Activated B cell treated with CpG ODN at 0.5 μM for 24 hours (primary cell): ENCODE measurements at regions of chr4 and their contacts with region 1.

Region 1: GRCh38 chr4:2934813-2935761 is 28.1 kb downstream of the NOP14 start:
- DNase-seq: peak; percentile 99
- ATAC-seq: peak; percentile 46
- H3K4me3 Mint-ChIP-seq: peak overlapping the region; percentile 83
- H3K27ac Mint-ChIP-seq: peak overlapping the region; percentile 59
- H3K4me1 Mint-ChIP-seq: peaks cover 66% of the 10 kb centered on the region
- H3K27me3 Mint-ChIP-seq: no peaks in the 10 kb centered on the region
- CTCF ChIP-seq: no peak

Region 2: DNA sequence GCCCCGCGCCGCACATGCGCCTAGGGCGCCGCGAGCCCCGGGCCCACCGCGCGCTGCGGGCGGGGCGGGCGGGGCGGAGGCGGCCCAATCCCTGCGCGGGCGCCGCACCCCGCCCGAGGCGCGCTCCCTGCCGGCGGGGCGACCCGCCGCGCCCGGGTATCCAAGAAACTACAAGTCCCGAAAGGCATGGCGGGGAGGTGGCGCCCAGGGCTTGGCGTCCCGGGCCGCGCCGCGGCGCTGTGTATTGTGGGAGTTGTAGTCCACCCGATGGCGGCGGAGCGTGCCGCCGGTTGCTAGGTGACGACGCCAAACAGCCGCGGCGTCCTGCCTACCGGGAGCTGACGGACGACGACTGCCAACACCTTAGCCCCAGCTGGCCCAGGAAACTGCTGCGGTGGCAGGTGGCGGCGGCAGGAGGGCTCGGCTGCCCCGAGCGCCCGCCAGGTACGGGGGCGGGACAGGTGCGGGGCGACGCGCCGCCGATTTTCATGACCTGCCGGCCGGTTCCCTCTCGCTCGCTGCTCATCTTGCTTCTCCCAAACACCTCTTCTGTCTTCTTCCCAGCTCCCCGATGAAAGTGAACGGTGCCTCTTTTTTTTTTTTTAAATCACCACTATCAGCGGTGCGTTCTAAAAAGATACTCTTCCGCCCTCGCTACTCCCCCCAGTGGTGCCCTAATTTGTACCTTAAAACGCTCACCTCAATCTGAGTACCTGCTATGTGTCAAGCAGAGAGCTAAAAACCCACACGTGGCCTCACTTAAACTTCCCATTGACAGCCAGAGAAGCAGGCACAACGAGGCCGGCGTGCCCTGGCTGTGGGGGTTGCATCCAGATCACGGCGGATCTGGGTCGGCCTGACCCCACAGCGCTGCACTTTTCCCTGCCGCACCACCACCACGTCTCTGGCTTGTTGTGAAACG is 516.2 kb before region 1 on chr4 and contains the start of gene CFAP99:
- CTCF ChIA-PET with region 1: no interaction called
- POLR2A ChIA-PET with region 1: no interaction called
- intact Hi-C with region 1: loop called (anchors 10 kb)
- DNase-seq: peak; percentile 93
- ATAC-seq: peak; percentile 91
- H3K4me3 Mint-ChIP-seq: peak within 1 kb of the TSS; percentile 91
- H3K27ac Mint-ChIP-seq: peak within 1 kb of the TSS; percentile 90
- H3K4me1 Mint-ChIP-seq: peaks cover 39% of the 10 kb centered on the region
- H3K27me3 Mint-ChIP-seq: peaks cover 28% of the 10 kb centered on the region
- CTCF ChIP-seq: no peak
- total RNA-seq, gene CFAP99: not detected in 2 replicates

Region 3: GRCh38 chr4:2598511-2599303 is 336.4 kb before region 1 on chr4:
- CTCF ChIA-PET with region 1: no interaction called
- POLR2A ChIA-PET with region 1: no interaction called
- intact Hi-C with region 1: loop called (anchors 2 kb)
- DNase-seq: peak; percentile 41
- ATAC-seq: peak; percentile 98
- H3K4me3 Mint-ChIP-seq: peak overlapping the region; percentile 67
- H3K27ac Mint-ChIP-seq: peak overlapping the region; percentile 85
- H3K4me1 Mint-ChIP-seq: peaks cover 68% of the 10 kb centered on the region
- H3K27me3 Mint-ChIP-seq: no peaks in the 10 kb centered on the region
- CTCF ChIP-seq: no peak

Region 4: GRCh38 chr4:2689825-2690700 is 245.0 kb before region 1 on chr4:
- CTCF ChIA-PET with region 1: no interaction called
- POLR2A ChIA-PET with region 1: interaction called, 4 read pairs
- intact Hi-C with region 1: loop called (anchors 2 kb)
- DNase-seq: peak; percentile 78
- ATAC-seq: peak; percentile 85
- H3K4me3 Mint-ChIP-seq: peak overlapping the region; percentile 75
- H3K27ac Mint-ChIP-seq: peak overlapping the region; percentile 95
- H3K4me1 Mint-ChIP-seq: peaks cover 70% of the 10 kb centered on the region
- H3K27me3 Mint-ChIP-seq: no peaks in the 10 kb centered on the region
- CTCF ChIP-seq: no peak

Region 5: DNA sequence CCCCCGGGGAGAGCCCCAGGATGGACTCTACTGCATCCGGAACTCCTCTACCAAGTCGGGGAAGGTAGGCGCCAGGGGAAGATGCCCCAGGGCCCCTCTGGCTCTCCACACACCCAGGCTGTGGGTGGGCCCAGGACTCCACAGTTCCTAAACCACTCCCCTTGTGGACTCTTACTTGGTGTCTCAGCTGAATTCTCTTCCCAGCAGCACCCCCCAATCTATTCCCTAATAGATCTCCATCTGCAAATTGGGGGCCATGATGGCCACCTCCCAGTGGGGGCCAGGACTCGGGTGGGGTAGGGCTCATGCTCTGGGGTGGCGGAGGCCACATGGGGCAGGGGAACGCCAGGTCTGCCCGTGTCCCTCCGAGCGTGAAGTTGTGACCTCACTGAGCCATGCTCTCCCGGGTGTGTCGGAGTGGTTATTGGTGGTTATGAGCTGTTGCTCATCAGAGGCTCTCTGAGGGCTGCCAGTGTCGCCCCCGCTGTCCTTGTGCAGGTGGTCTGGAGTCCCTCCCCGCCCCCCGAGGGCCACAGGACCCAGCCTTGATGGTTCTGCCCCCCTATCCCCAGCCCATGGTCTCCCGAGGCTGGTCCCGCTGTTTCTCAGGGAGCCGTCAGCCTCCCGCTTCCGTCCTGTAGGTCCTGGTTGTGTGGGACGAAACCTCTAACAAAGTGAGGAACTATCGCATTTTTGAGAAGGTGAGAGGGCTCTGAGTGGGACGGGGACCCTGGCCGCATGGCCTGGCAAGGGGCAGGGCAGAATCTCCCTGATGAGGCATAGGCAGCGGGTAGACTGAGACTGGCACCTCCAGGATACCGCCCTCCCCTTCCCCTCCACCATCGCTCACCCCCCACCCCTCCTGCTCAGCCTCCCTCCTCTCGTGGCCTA is 102.5 kb before region 1 on chr4:
- CTCF ChIA-PET with region 1: no interaction called
- POLR2A ChIA-PET with region 1: no interaction called
- intact Hi-C with region 1: loop called (anchors 5 kb)
- DNase-seq: peak; percentile 65
- ATAC-seq: peak; percentile 85
- H3K4me3 Mint-ChIP-seq: peak overlapping the region; percentile 67
- H3K27ac Mint-ChIP-seq: peak overlapping the region; percentile 83
- H3K4me1 Mint-ChIP-seq: peaks cover 60% of the 10 kb centered on the region
- H3K27me3 Mint-ChIP-seq: no peaks in the 10 kb centered on the region
- CTCF ChIP-seq: no peak

Region 6: DNA sequence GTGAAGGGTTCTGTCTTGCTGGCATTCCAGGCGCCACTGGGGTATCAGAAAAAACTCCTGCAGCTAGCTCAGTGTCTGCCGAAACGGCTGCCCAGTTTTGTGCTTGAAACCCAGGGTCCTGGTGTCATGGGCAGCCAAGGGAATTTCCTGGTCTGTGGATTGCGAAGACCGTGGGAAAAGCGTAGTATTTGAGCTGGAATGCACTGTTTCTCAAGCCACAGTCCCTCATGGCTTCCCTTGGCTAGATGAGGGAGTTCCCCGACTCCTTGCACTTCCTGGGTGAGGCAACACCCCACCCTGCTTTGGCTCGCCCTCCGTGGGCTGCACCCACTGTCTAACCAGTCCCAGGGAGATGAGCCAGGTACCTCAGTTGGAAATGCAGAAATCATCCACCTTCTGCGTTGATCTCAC is 11.9 kb before region 1 on chr4:
- CTCF ChIA-PET with region 1: no interaction called
- POLR2A ChIA-PET with region 1: interaction called, 17 read pairs
- intact Hi-C with region 1: loop called (anchors 1 kb)
- DNase-seq: no peak
- ATAC-seq: no peak
- H3K4me3 Mint-ChIP-seq: no peak overlapping the region
- H3K27ac Mint-ChIP-seq: peak overlapping the region; percentile 79
- H3K4me1 Mint-ChIP-seq: peaks cover 65% of the 10 kb centered on the region
- H3K27me3 Mint-ChIP-seq: no peaks in the 10 kb centered on the region
- CTCF ChIP-seq: no peak

Region 7: GRCh38 chr4:2963175-2963965 is 28.3 kb after region 1 on chr4 and contains the starts of genes GRK4 and NOP14:
- CTCF ChIA-PET with region 1: interaction called, 7 read pairs
- POLR2A ChIA-PET with region 1: interaction called, 31 read pairs
- intact Hi-C with region 1: loop called (anchors 1 kb)
- DNase-seq: peak; percentile 89
- ATAC-seq: peak; percentile 91
- H3K4me3 Mint-ChIP-seq: peak within 1 kb of the TSS; percentile 91
- H3K27ac Mint-ChIP-seq: peak within 1 kb of the TSS; percentile 92
- H3K4me1 Mint-ChIP-seq: peaks cover 29% of the 10 kb centered on the region
- H3K27me3 Mint-ChIP-seq: no peaks in the 10 kb centered on the region
- CTCF ChIP-seq: no peak
- total RNA-seq, gene GRK4: 1.4 and 2.1 TPM in 2 replicates
- total RNA-seq, gene NOP14: 56.3 and 57.3 TPM in 2 replicates